Breast epithelium (tissue), 4 donors: ENCODE measurements at regions of chr4 and their contacts with region 1.

Region 1: GRCh38 chr4:12929784-12930183 is 554.4 kb downstream of the RAB28 start:
- DNase-seq: no peak
- H3K4me3 ChIP-seq: no peak overlapping the region
- H3K27ac ChIP-seq: no peak overlapping the region
- H3K4me1 ChIP-seq: no peaks in the 10 kb centered on the region
- H3K27me3 ChIP-seq: no peaks in the 10 kb centered on the region
- CTCF ChIP-seq: no peak
- POLR2A ChIP-seq: no peak

Region 2: GRCh38 chr4:12979797-12980196 is 50.0 kb after region 1 on chr4:
- intact Hi-C with region 1: loop called (anchors 2 kb)
- DNase-seq: no peak
- H3K4me3 ChIP-seq: no peak overlapping the region
- H3K27ac ChIP-seq: no peak overlapping the region
- H3K4me1 ChIP-seq: no peaks in the 10 kb centered on the region
- H3K27me3 ChIP-seq: no peaks in the 10 kb centered on the region
- CTCF ChIP-seq: no peak
- POLR2A ChIP-seq: no peak